ENCODE measurements at regions of chr5 and their contacts with region 1.

Region 1: GRCh38 chr5:53481887-53482716 is 1.7 kb downstream of the FST start:
- DNase-seq: peak; percentile 89 to 94
- ATAC-seq: peak; percentile 86
- H3K4me3 ChIP-seq: peak overlapping the region; percentile 37 to 59
- H3K27ac ChIP-seq: peak overlapping the region in 1 of 2 donors; percentile 8
- H3K4me1 ChIP-seq: no peaks in the 10 kb centered on the region
- H3K27me3 ChIP-seq: no peaks in the 10 kb centered on the region

Region 2: GRCh38 chr5:53041071-53041692 is 440.9 kb before region 1 on chr5:
- intact Hi-C with region 1: no loop called
- DNase-seq: no peak
- ATAC-seq: no peak
- H3K4me3 ChIP-seq: no peak overlapping the region
- H3K27ac ChIP-seq: no peak overlapping the region
- H3K4me1 ChIP-seq: no peaks in the 10 kb centered on the region
- H3K27me3 ChIP-seq: no peaks in the 10 kb centered on the region

Region 3: DNA sequence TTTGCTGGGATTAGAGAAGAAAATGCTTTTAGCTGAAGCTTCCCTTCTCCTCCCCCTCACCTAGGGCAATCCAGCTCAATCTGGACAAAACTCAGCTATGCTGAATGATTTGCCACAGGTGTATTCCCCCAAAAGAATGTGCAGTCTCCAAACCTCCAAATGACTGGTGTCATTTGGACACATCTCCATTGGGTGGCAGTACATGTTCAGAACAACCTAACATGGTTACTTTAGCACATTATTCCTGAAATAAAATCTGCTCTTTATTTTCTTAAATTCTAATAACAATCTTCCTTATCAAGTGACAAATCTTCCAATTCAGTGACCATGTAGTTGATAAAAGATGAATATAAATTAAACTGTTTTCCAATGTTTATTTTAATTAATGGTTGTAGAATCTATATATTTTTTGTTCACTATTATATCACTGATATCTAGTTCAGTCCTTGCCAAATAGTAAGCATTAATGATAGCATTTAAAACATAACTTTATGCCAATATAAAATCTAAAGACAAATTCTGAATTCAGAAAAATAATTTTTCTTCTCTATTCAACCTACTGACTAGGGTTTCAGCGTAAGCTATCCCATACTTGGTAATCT is 311.3 kb before region 1 on chr5:
- intact Hi-C with region 1: loop called in 1 of 2 experiments (anchors 2 kb)
- DNase-seq: no peak
- ATAC-seq: no peak
- H3K4me3 ChIP-seq: no peak overlapping the region
- H3K27ac ChIP-seq: no peak overlapping the region
- H3K4me1 ChIP-seq: no peaks in the 10 kb centered on the region
- H3K27me3 ChIP-seq: no peaks in the 10 kb centered on the region

Region 4: DNA sequence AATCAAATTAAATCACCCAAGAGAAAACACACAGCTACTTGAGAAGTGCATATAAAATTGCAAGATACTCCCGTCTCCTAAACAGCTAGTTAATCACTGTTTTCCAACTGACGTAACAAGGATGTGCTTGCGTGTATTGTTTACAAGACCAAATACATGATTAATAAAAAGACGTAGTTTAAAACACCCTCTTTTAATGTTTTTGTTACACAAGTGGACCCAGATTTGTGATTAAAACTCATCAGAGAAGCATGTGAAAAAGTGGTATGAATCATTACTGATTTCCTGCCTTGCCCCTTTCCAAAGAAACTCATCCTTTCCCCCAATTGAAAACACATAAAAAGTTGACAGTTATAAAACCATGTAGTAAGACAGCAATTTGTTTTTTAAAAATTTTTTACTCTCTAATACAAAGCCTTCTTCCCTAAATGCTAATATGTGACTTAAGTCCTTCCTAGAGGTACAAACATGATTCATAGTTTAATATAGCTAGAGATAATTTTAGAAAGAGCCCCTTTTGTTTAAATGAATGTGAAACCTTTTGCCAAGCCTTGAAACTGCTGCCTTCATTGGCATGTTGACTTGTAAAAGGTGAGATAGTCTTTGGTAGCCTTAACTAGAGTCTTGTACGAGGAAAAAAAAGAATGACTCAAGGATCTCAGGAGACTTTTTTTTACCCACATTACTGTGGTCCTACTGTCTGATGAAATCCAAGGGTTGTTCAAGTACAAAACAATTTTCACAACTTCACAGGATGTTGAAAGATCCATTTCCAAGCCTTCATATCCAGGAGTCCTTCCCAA is 63.1 kb before region 1 on chr5:
- intact Hi-C with region 1: no loop called
- DNase-seq: no peak
- ATAC-seq: no peak
- H3K4me3 ChIP-seq: no peak overlapping the region
- H3K27ac ChIP-seq: no peak overlapping the region
- H3K4me1 ChIP-seq: peaks cover 0 to 2% of the 10 kb centered on the region in 2 donors
- H3K27me3 ChIP-seq: no peaks in the 10 kb centered on the region

Region 5: DNA sequence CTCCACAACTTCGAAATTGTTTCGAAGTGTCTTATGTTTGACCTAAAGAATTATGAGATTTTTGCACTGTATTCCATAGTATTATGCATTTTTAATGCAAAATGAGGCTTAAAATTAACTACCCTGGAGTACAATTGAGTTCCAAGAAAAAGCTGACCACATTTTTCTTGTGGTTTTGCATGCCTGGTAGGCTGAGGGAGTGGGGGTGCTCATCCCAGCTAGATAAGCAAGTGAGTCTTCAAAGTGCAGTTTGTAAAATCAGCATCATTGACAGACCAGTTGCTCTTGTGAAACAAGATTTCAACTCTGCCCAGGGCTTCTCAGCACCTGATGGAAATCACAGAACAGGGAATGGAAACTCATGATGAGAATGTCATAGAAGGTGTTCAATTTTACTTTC is 61.3 kb after region 1 on chr5:
- intact Hi-C with region 1: no loop called
- DNase-seq: no peak
- ATAC-seq: no peak
- H3K4me3 ChIP-seq: no peak overlapping the region
- H3K27ac ChIP-seq: no peak overlapping the region
- H3K4me1 ChIP-seq: no peaks in the 10 kb centered on the region
- H3K27me3 ChIP-seq: no peaks in the 10 kb centered on the region

Region 6: DNA sequence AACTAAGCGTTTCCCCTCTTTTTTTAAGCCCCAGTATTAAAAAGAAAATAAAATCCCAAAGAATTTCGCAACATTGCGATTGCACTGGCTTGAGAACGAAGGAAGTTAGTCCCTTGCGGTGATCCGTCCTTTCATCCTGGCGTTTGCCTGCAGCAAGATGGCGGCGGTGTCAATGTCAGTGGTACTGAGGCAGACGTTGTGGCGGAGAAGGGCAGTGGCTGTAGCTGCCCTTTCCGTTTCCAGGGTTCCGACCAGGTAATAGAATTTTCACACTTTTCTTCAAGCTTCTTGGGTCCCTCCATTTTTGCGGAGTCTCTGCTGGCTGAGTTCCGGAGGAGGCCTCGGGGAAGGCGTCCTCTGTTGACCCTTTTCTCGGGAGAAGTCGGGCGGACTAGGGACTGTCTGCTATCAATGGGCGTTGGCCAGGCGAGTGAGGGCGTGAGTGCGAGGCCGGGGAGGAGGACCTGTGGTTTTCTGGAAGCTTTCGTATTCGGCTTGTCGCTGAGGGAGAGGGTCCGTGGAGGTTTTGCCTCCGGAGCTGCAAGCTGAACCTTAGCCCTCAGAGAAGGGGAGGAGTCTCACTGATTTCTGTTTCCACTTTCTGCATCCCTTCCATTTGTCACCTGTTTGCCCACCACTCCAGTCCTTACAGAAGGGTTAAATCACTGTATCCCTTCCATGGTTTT is 78.5 kb after region 1 on chr5 and contains the start of gene NDUFS4:
- intact Hi-C with region 1: loop called in 1 of 2 experiments (anchors 5 kb)
- DNase-seq: peak; percentile 92
- ATAC-seq: peak; percentile 95
- H3K4me3 ChIP-seq: peak within 1 kb of the TSS; percentile 83 to 84
- H3K27ac ChIP-seq: peak within 1 kb of the TSS in 1 of 2 donors; percentile 91
- H3K4me1 ChIP-seq: no peaks in the 10 kb centered on the region
- H3K27me3 ChIP-seq: no peaks in the 10 kb centered on the region
- total RNA-seq, gene NDUFS4: 56.6 to 60.8 TPM

Region 7: GRCh38 chr5:54217826-54218503 is 735.9 kb after region 1 on chr5:
- intact Hi-C with region 1: loop called (anchors 5 to 10 kb)
- DNase-seq: no peak
- ATAC-seq: peak; percentile 81
- H3K4me3 ChIP-seq: no peak overlapping the region
- H3K27ac ChIP-seq: no peak overlapping the region
- H3K4me1 ChIP-seq: peaks cover 0 to 1% of the 10 kb centered on the region in 2 donors
- H3K27me3 ChIP-seq: no peaks in the 10 kb centered on the region

Region 8: GRCh38 chr5:54229041-54229780 is 747.1 kb after region 1 on chr5:
- intact Hi-C with region 1: loop called in 1 of 2 experiments (anchors 10 kb)
- DNase-seq: peak; percentile 72 to 85
- ATAC-seq: no peak
- H3K4me3 ChIP-seq: no peak overlapping the region
- H3K27ac ChIP-seq: no peak overlapping the region
- H3K4me1 ChIP-seq: peaks cover 0 to 2% of the 10 kb centered on the region in 2 donors
- H3K27me3 ChIP-seq: no peaks in the 10 kb centered on the region

Measured in aorta (tissue), 5 donors.